ENCODE measurements at regions of chr17 and their contacts with region 1.

Region 1: DNA sequence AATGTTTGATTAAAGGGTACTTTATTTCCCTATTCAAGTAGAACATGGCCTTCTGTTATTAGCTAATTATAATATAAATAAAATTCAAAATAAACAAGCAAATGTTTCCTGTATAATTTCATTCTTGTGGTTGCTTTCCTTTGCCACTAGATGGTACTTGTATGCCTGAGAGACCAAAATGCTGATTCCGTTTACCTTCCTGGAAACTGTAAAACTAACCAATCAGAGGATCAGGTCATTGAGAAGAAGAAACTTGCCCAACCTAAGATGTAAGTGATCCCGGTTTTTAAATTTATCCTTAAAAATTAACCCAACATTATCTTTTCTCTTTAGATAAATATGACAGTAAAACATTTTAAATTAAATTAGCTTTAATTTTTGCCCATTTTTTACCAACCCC is 8.1 kb upstream of the ABCA5 start:
- DNase-seq: no peak
- ATAC-seq: peak; percentile 50 to 80
- H3K4me3 ChIP-seq: peak overlapping the region in 2 of 4 donors; percentile 22 to 27
- H3K27ac ChIP-seq: peak overlapping the region in 3 of 4 donors; percentile 60 to 97 (median 90)
- H3K4me1 ChIP-seq: peaks cover 0 to 17% of the 10 kb centered on the region in 2 donors
- H3K27me3 ChIP-seq: no peaks in the 10 kb centered on the region
- CTCF ChIP-seq: peak; percentile 66 to 82 (median 71)
- POLR2A ChIP-seq: no peak

Region 2: GRCh38 chr17:69166957-69167356 is 168.1 kb before region 1 on chr17:
- in situ Hi-C with region 1: no loop called
- intact Hi-C with region 1: no loop called
- DNase-seq: no peak
- ATAC-seq: no peak
- H3K4me3 ChIP-seq: no peak overlapping the region
- H3K27ac ChIP-seq: no peak overlapping the region
- H3K4me1 ChIP-seq: peaks cover 0 to 5% of the 10 kb centered on the region in 2 donors
- H3K27me3 ChIP-seq: no peaks in the 10 kb centered on the region
- CTCF ChIP-seq: no peak
- POLR2A ChIP-seq: no peak

Region 3: GRCh38 chr17:69358688-69359596 is 23.9 kb after region 1 on chr17:
- in situ Hi-C with region 1: no loop called
- intact Hi-C with region 1: loop called (anchors 2 kb)
- DNase-seq: no peak
- ATAC-seq: no peak
- H3K4me3 ChIP-seq: no peak overlapping the region
- H3K27ac ChIP-seq: no peak overlapping the region
- H3K4me1 ChIP-seq: peaks cover 10 to 12% of the 10 kb centered on the region in 2 donors
- H3K27me3 ChIP-seq: no peaks in the 10 kb centered on the region
- CTCF ChIP-seq: no peak
- POLR2A ChIP-seq: no peak

Region 4: DNA sequence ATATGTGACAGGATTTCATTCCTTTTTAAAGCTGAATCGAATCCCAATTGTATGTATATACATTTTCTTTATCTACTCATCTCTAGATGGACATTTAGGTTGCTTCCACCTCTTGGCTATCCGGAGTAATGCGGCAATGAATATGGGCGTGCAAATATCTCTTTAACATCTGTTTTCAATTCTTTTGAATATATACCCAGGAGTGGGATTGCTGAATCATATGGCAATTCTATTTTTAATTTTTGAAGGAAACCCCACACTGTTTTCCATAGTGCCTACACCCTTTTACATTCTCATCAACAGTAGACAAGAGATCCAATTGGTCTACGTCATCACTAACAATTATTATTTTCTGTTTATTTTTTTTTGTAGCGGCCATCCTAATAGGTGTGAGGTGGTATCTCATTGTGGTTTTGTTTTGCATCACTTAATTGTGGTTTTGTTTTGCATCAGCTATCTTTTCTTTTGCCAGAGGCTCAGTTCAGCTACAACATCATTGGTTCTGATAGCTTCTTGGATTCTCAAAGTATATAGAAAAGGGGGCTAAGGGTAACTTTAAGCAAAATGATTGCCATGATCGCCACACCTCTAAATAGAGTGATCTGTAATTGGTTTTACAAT is 53.9 kb after region 1 on chr17:
- in situ Hi-C with region 1: no loop called
- intact Hi-C with region 1: loop called (anchors 2 kb)
- DNase-seq: no peak
- ATAC-seq: no peak
- H3K4me3 ChIP-seq: no peak overlapping the region
- H3K27ac ChIP-seq: no peak overlapping the region
- H3K4me1 ChIP-seq: no peaks in the 10 kb centered on the region
- H3K27me3 ChIP-seq: no peaks in the 10 kb centered on the region
- CTCF ChIP-seq: no peak
- POLR2A ChIP-seq: no peak

Region 5: GRCh38 chr17:69414408-69415274 is 79.6 kb after region 1 on chr17 and contains the start of gene MAP2K6:
- in situ Hi-C with region 1: no loop called
- intact Hi-C with region 1: loop called (anchors 5 kb)
- DNase-seq: peak; percentile 78 to 83
- ATAC-seq: peak; percentile 86 to 91
- H3K4me3 ChIP-seq: peak within 1 kb of the TSS; percentile 60 to 94 (median 66)
- H3K27ac ChIP-seq: peak within 1 kb of the TSS; percentile 84 to 88 (median 86)
- H3K4me1 ChIP-seq: peaks cover 36 to 44% of the 10 kb centered on the region in 2 donors
- H3K27me3 ChIP-seq: no peaks in the 10 kb centered on the region
- CTCF ChIP-seq: no peak
- POLR2A ChIP-seq: peak; percentile 38 to 41
- total RNA-seq, gene MAP2K6: 35.1 to 351 (median 223) TPM

Region 6: DNA sequence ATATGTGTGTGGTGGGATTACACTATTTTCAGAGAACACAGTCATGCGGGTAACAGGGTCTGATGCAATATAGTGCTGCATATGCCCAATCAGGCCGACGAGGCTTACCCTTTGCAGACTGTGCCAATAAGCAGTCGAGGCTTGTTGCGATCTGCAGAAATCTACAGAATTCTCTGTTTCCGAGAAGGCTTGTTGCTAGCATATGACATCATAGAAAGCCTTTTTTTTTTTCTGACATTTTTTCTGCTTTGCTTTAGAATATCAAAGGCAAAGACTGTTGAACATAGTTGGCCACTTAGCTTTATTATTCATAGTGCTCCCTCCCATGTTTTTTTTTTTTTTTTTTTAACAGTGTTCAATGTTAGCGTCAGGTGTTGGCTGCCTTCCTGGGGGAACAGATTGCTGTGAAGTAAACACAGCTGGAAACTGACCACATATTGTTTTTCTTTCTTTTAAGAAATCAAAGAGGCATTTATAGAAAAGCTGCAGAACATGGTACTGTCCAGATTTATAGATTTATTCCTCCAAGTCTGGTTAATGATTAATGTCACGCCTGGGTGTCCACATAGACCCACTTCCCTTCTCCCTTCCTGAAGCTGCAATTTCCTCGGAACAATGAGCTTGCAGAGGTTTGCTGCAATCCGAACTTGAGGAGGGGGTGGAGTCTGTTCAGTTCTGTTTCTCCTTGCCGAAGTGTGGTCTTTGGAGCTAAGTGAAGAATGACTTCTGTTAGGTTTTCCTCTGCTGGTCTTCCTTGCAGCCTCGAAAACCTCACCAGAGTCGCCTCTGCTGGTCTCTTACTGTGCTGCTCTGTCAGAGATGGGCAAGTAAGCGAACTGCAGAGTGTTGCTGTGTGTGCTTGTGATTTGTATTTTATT is 166.8 kb after region 1 on chr17:
- in situ Hi-C with region 1: no loop called
- intact Hi-C with region 1: loop called (anchors 5 kb)
- DNase-seq: peak; percentile 34 to 70
- ATAC-seq: peak; percentile 51 to 58
- H3K4me3 ChIP-seq: peak overlapping the region; percentile 35 to 53 (median 52)
- H3K27ac ChIP-seq: peak overlapping the region; percentile 81 to 93 (median 88)
- H3K4me1 ChIP-seq: peaks cover 63 to 64% of the 10 kb centered on the region in 2 donors
- H3K27me3 ChIP-seq: no peaks in the 10 kb centered on the region
- CTCF ChIP-seq: no peak
- POLR2A ChIP-seq: peak; percentile 38 to 71